ENCODE measurements at regions of chrX and their contacts with region 1.

Region 1: GRCh38 chrX:13293700-13294099 is 26.2 kb downstream of the ATXN3L start:
- DNase-seq: peak in 1 of 4 experiments; percentile 14
- ATAC-seq: peak; percentile 14
- H3K4me3 ChIP-seq: peak overlapping the region; percentile 40
- H3K27ac ChIP-seq: peak overlapping the region; percentile 57
- H3K4me1 ChIP-seq: peaks cover 0 to 12% of the 10 kb centered on the region in 2 experiments; a peak in 2 of 5 replicates
- H3K27me3 ChIP-seq: no peaks in the 10 kb centered on the region
- CTCF ChIP-seq: no peak
- EP300 ChIP-seq: no peak
- POLR2A ChIP-seq: no peak
- RAD21 ChIP-seq: no peak

Region 2: DNA sequence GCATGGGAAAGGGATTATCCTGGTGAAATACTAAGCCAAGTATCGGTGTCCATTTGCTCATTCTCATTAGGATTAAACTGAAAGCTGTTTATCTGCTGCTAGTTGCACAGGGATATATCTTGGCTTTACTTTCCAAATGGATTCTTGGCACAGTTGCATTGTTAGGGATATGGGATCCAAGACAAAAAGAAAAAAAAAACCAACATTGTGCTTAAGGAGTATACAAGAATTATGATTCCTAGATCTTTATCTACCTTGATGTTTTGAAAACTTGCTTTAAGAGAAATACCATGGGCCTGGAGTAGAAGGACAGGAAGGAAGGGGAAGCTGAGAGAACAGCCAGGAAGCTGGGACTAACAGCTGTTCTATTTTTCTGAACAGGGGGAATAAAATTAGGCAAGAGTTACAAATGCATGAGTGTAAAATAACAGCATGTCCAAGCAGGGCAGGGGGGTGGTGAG is 81.5 kb before region 1 on chrX:
- CTCF ChIA-PET with region 1: no interaction called
- POLR2A ChIA-PET with region 1: no interaction called
- in situ Hi-C with region 1: no loop called
- intact Hi-C with region 1: no loop called
- DNase-seq: no peak
- ATAC-seq: no peak
- H3K4me3 ChIP-seq: no peak overlapping the region
- H3K27ac ChIP-seq: no peak overlapping the region
- H3K4me1 ChIP-seq: no peaks in the 10 kb centered on the region
- H3K27me3 ChIP-seq: no peaks in the 10 kb centered on the region
- CTCF ChIP-seq: no peak
- EP300 ChIP-seq: no peak
- POLR2A ChIP-seq: no peak
- RAD21 ChIP-seq: no peak

Region 3: GRCh38 chrX:13304052-13304451 is 10.4 kb after region 1 on chrX:
- CTCF ChIA-PET with region 1: no interaction called
- POLR2A ChIA-PET with region 1: interaction called, 10 read pairs
- in situ Hi-C with region 1: no loop called
- intact Hi-C with region 1: no loop called
- DNase-seq: no peak
- ATAC-seq: no peak
- H3K4me3 ChIP-seq: no peak overlapping the region
- H3K27ac ChIP-seq: no peak overlapping the region; the same call in 2 of the 3 replicates
- H3K4me1 ChIP-seq: peaks cover 3 to 8% of the 10 kb centered on the region in 2 experiments; a peak in 3 of 5 replicates
- H3K27me3 ChIP-seq: no peaks in the 10 kb centered on the region
- CTCF ChIP-seq: no peak
- EP300 ChIP-seq: no peak
- POLR2A ChIP-seq: no peak
- RAD21 ChIP-seq: no peak

Measured in K562 (cell line).